Calu3 (cell line): ENCODE measurements at regions of chr3 and their contacts with region 1.

Region 1: GRCh38 chr3:190458040-190458439 is 8.3 kb upstream of the TMEM207 start:
- DNase-seq: peak; percentile 48
- H3K4me3 Mint-ChIP-seq: peak overlapping the region; percentile 60
- H3K27ac Mint-ChIP-seq: peak overlapping the region; percentile 80
- H3K4me1 Mint-ChIP-seq: peaks cover 45% of the 10 kb centered on the region
- H3K27me3 Mint-ChIP-seq: no peaks in the 10 kb centered on the region
- CTCF ChIP-seq: no peak

Region 2: GRCh38 chr3:188900421-188900951 is 1557.6 kb before region 1 on chr3:
- CTCF ChIA-PET with region 1: no interaction called
- intact Hi-C with region 1: no loop called
- DNase-seq: no peak
- H3K4me3 Mint-ChIP-seq: no peak overlapping the region
- H3K27ac Mint-ChIP-seq: no peak overlapping the region
- H3K4me1 Mint-ChIP-seq: peaks cover 9% of the 10 kb centered on the region
- H3K27me3 Mint-ChIP-seq: no peaks in the 10 kb centered on the region
- CTCF ChIP-seq: no peak

Region 3: DNA sequence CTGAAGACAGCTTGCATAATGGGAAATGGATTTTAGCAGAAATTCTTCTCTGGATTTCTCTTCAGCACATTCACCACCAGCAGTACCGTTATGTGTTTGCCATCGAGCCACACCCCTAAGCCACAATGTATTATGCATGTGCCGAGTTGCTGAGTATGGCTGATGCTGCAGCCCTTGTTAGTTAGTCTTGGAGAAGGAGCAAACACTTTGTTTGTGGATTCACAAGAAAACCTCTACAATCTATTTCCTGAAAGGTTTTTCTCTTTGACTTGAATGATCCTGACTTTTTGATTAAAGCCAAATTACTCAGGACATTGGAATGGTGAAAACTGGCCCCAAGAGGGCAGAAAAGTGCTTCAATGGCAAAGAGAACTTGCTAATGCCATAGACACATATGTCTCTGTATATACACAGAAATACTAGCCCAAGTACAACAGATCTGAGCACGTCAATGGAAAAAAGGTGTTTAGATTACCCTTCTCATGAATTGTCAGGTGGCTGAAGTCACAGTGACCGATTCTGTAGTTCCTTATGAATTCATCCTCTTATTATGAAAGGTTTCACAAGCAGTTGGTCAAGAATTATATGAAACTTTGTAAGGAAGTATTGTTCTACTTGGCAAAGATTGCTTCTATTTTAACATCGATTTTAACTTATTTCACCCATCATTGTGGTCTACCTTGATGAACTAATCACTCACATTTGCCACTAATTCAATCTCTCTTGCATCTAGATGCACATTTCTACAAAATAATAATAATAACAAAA is 440.3 kb before region 1 on chr3:
- CTCF ChIA-PET with region 1: no interaction called
- intact Hi-C with region 1: loop called (anchors 5 kb)
- DNase-seq: peak; percentile 61
- H3K4me3 Mint-ChIP-seq: no peak overlapping the region
- H3K27ac Mint-ChIP-seq: no peak overlapping the region
- H3K4me1 Mint-ChIP-seq: peaks cover 30% of the 10 kb centered on the region
- H3K27me3 Mint-ChIP-seq: no peaks in the 10 kb centered on the region
- CTCF ChIP-seq: peak; percentile 31

Region 4: DNA sequence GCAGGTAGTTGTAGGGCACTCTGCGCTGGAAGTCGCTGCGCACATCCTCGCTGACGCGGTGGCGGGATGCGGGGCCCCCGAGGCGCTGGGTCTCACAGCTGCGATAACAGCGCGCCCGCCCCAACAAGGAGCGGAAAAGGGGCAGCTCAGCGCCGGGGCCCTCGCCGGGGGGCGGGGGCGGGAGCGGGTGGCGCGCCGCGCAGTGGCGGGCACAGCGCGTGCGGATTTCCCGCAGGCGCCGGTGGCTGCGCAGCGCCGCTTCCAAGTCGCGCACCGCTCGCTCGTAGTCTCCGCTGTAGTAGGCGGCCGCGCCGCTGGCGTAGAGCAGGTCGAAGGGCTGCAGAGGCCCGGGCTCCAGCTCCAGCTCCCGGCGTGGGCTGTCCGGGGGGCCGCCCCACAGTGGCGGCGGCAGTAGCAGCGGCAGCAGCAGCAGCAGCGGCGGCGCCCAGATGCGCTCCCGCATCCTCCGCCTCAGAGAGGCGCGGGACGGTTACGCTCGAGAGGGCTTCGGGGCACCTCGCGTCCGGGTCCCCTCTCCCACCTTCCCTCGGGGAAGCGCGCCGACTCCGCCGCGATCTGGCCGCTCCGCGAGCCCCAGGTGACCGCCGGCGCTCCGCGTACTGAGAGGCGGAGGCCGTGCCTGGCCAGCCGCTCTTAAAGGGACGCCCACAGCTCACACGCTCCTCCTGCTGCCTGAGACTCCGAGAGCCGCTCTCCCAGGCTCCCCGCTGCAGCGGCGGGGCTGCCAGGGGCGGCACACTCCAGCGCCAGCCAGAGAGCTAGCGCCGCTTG is 337.6 kb before region 1 on chr3 and contains the start of gene P3H2:
- CTCF ChIA-PET with region 1: no interaction called
- intact Hi-C with region 1: no loop called
- DNase-seq: peak; percentile 94
- H3K4me3 Mint-ChIP-seq: peak within 1 kb of the TSS; percentile 63
- H3K27ac Mint-ChIP-seq: peak within 1 kb of the TSS; percentile 13
- H3K4me1 Mint-ChIP-seq: peaks cover 88% of the 10 kb centered on the region
- H3K27me3 Mint-ChIP-seq: peaks cover 21% of the 10 kb centered on the region
- CTCF ChIP-seq: peak; percentile 7
- total RNA-seq, gene P3H2: 5.9 and 7.1 TPM in 2 replicates

Region 5: DNA sequence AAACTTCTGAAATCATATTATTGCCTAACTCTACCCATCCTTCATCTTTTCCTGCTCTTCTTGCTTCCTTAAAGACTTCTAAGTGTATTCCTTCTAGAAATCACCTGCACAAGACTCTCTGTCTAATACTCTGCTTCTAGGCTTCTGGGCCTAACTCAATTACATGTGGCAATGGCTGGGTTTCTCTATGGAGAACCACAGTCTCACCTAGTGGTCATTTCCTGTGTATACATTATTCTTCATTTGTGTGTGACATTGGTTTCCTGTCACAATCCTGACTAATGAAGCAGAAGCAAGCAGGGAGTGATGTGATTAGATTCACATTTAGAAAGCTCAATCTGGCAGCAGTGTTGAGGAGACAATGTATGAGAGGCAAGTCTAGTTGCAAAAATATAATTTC is 118.9 kb before region 1 on chr3:
- CTCF ChIA-PET with region 1: no interaction called
- intact Hi-C with region 1: loop called (anchors 1 kb)
- DNase-seq: no peak
- H3K4me3 Mint-ChIP-seq: no peak overlapping the region
- H3K27ac Mint-ChIP-seq: peak overlapping the region; percentile 12
- H3K4me1 Mint-ChIP-seq: peaks cover 42% of the 10 kb centered on the region
- H3K27me3 Mint-ChIP-seq: no peaks in the 10 kb centered on the region
- CTCF ChIP-seq: peak; percentile 69

Region 6: DNA sequence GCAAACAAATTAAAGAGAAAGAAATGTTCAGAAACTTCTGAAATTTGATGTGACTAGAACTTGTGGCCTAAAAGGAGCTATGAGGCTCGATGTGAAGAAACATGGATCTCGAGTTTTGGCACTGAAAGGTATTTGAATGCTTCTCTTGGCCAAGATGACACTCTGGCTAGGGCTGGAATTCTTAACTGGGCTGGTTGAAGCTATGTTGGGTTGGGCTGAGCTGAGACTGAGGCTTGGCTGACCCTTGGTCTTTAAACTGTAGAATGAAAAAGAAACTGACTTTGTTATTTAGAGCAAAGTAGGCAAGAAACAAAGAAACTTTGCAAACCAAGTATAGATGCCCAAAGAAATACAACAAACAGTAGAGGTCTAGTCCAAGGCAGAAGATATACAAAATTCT is 98.2 kb before region 1 on chr3:
- CTCF ChIA-PET with region 1: no interaction called
- intact Hi-C with region 1: no loop called
- DNase-seq: no peak
- H3K4me3 Mint-ChIP-seq: no peak overlapping the region
- H3K27ac Mint-ChIP-seq: no peak overlapping the region
- H3K4me1 Mint-ChIP-seq: peaks cover 37% of the 10 kb centered on the region
- H3K27me3 Mint-ChIP-seq: no peaks in the 10 kb centered on the region
- CTCF ChIP-seq: no peak

Region 7: GRCh38 chr3:190443257-190443656 is 14.8 kb before region 1 on chr3:
- CTCF ChIA-PET with region 1: interaction called, 9 read pairs
- intact Hi-C with region 1: loop called (anchors 1 kb)
- DNase-seq: peak; percentile 48
- H3K4me3 Mint-ChIP-seq: no peak overlapping the region
- H3K27ac Mint-ChIP-seq: peak overlapping the region; percentile 44
- H3K4me1 Mint-ChIP-seq: peaks cover 47% of the 10 kb centered on the region
- H3K27me3 Mint-ChIP-seq: no peaks in the 10 kb centered on the region
- CTCF ChIP-seq: peak; percentile 64

Region 8: GRCh38 chr3:190566043-190566933 is 108.2 kb after region 1 on chr3:
- CTCF ChIA-PET with region 1: no interaction called
- intact Hi-C with region 1: loop called (anchors 2 kb)
- DNase-seq: peak; percentile 98
- H3K4me3 Mint-ChIP-seq: peak overlapping the region; percentile 7
- H3K27ac Mint-ChIP-seq: peak overlapping the region; percentile 84
- H3K4me1 Mint-ChIP-seq: peaks cover 62% of the 10 kb centered on the region
- H3K27me3 Mint-ChIP-seq: no peaks in the 10 kb centered on the region
- CTCF ChIP-seq: no peak